ENCODE measurements at regions of chr15 and their contacts with region 1.

Region 1: GRCh38 chr15:45855907-45856579 is 221.2 kb downstream of the SQOR start:
- DNase-seq: peak; percentile 85
- ATAC-seq: peak; percentile 77
- H3K4me3 ChIP-seq: peak overlapping the region; percentile 39
- H3K27ac ChIP-seq: peak overlapping the region; percentile 86
- H3K4me1 ChIP-seq: peaks cover 43% of the 10 kb centered on the region
- H3K27me3 ChIP-seq: no peaks in the 10 kb centered on the region
- CTCF ChIP-seq: no peak

Region 2: DNA sequence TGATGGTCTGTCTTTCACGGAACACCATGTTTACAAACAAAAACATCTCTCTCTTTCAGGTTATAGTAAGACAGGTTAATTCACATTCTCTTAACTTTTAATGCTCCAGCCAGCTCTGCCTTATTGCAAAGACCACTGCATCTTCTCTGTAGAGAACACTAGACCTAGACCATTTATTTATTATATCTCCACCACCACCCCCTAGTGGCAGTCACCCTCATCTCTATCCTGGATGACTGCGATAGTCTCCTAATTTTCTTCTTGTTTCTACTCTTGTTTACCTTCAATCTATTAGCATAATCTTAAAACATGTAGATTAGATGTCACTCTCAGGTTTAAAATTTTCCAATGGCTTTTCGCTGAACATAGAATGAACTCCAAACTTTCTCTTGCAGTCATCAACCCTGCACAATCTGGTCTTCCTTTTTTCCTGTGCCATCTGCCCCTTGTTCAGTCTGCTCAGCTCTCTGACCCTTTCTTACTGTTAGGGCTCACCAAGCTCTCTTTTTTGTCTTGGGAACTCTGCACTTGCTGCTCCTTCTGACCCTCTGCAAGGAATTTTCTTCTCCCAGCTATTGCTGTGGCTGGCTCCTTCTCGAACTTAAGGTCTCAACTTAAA is 65.6 kb before region 1 on chr15:
- CTCF ChIA-PET with region 1: no interaction called
- POLR2A ChIA-PET with region 1: no interaction called
- intact Hi-C with region 1: no loop called
- DNase-seq: peak; percentile 47
- ATAC-seq: peak; percentile 71
- H3K4me3 ChIP-seq: no peak overlapping the region
- H3K27ac ChIP-seq: no peak overlapping the region
- H3K4me1 ChIP-seq: no peaks in the 10 kb centered on the region; the same call in 1 of the 2 replicates
- H3K27me3 ChIP-seq: no peaks in the 10 kb centered on the region
- CTCF ChIP-seq: peak; percentile 79

Region 3: DNA sequence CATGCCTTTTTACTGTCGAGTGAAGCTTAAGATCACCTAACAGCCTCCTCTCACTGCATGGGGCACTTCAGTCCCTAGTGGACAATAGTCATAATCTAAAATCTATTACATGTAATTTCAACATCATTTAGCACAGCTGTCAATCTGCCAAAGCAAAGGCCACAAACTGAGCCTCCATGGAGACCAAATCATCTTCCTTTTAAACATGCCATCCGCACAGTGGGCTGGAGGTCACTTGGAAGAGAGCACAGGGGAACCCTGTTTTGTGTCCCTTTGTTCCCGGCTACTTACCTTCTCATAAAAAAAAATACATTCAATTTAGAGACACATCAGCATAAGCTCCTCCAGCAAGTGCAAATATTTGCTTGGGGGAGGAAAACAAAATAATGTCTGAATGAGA is 53.9 kb before region 1 on chr15:
- CTCF ChIA-PET with region 1: no interaction called
- POLR2A ChIA-PET with region 1: no interaction called
- intact Hi-C with region 1: loop called (anchors 2 kb)
- DNase-seq: peak; percentile 56
- ATAC-seq: peak; percentile 74
- H3K4me3 ChIP-seq: no peak overlapping the region
- H3K27ac ChIP-seq: peak overlapping the region; percentile 18; the same call in 1 of the 2 replicates
- H3K4me1 ChIP-seq: 0 out of 2 replicates have a peak, but pooled peaks cover 12% of the 10 kb centered on the region
- H3K27me3 ChIP-seq: no peaks in the 10 kb centered on the region
- CTCF ChIP-seq: no peak; the same call in 1 of the 2 replicates

Region 4: DNA sequence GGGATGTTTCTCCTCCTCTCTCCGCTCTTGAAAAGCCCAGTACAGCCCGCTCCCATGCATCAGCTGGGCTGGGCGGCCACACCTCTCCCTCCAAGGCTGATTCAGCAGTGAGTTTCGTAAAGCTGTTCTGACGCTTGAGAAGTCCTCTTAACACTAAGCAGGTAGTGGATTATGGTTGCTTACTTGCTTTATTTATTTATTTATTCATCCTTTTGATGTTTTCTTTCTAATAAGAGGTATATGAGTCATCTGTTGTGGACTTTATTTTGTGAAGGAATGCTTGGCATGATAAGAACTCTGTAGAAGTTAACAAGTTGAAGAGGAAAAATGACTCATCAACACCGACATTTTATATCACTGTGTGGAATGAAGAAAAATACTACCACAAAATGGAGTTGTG is 63.8 kb after region 1 on chr15:
- CTCF ChIA-PET with region 1: no interaction called
- POLR2A ChIA-PET with region 1: interaction called, 3 read pairs
- intact Hi-C with region 1: loop called (anchors 1 kb)
- DNase-seq: peak; percentile 88
- ATAC-seq: peak; percentile 100
- H3K4me3 ChIP-seq: no peak overlapping the region
- H3K27ac ChIP-seq: peak overlapping the region; percentile 45
- H3K4me1 ChIP-seq: peaks cover 14% of the 10 kb centered on the region
- H3K27me3 ChIP-seq: no peaks in the 10 kb centered on the region
- CTCF ChIP-seq: no peak

Region 5: GRCh38 chr15:46127361-46127874 is 271.4 kb after region 1 on chr15:
- CTCF ChIA-PET with region 1: no interaction called
- POLR2A ChIA-PET with region 1: no interaction called
- intact Hi-C with region 1: loop called (anchors 5 kb)
- DNase-seq: peak; percentile 90
- ATAC-seq: peak; percentile 88
- H3K4me3 ChIP-seq: peak overlapping the region; percentile 51
- H3K27ac ChIP-seq: peak overlapping the region; percentile 100
- H3K4me1 ChIP-seq: peaks cover 30% of the 10 kb centered on the region
- H3K27me3 ChIP-seq: no peaks in the 10 kb centered on the region
- CTCF ChIP-seq: no peak

Measured in PC-3 (cell line).